ENCODE measurements at regions of chr20 and their contacts with region 1.

Region 1: GRCh38 chr20:35741892-35742740 is at the start of gene RBM39:
- DNase-seq: peak; percentile 97 to 100 (median 99)
- ATAC-seq: peak; percentile 81
- H3K4me3 ChIP-seq: peak within 1 kb of the TSS; percentile 87 to 98
- H3K4me3 Mint-ChIP-seq: peak within 1 kb of the TSS; percentile 96
- H3K27ac ChIP-seq: peak within 1 kb of the TSS; percentile 99 to 100
- H3K27ac Mint-ChIP-seq: peak within 1 kb of the TSS; percentile 100
- H3K4me1 ChIP-seq: peaks cover 44% of the 10 kb centered on the region
- H3K4me1 Mint-ChIP-seq: peaks cover 47% of the 10 kb centered on the region
- H3K27me3 ChIP-seq: no peaks in the 10 kb centered on the region
- H3K27me3 Mint-ChIP-seq: no peaks in the 10 kb centered on the region
- CTCF ChIP-seq: peak; percentile 44
- total RNA-seq, gene RBM39: 1,168 to 1,202 TPM

Region 2: DNA sequence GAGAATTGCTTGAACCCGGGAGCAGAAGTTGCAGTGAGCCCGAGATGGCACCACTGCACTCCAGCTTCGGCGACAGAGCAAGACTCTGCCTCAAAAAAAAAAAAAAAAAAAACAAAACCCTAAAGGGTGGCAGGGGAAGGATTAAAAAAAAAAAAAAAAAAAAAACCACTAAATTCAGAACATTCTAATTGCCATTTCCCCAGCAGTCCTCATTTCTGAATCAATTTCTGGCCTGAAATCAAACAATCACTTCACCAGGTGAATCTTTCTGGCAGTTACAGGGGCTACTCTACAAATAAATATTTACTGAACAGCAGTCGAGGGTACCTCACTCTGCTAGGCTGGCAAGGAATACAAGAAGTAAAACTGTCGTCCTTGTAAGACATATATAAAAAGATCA is 331.5 kb before region 1 on chr20:
- CTCF ChIA-PET with region 1: no interaction called
- POLR2A ChIA-PET with region 1: no interaction called
- intact Hi-C with region 1: no loop called
- DNase-seq: no peak
- ATAC-seq: no peak
- H3K4me3 ChIP-seq: no peak overlapping the region
- H3K4me3 Mint-ChIP-seq: peak overlapping the region; percentile 96
- H3K27ac ChIP-seq: no peak overlapping the region
- H3K27ac Mint-ChIP-seq: peak overlapping the region; percentile 97
- H3K4me1 ChIP-seq: peaks cover 8% of the 10 kb centered on the region
- H3K4me1 Mint-ChIP-seq: peaks cover 25% of the 10 kb centered on the region
- H3K27me3 ChIP-seq: no peaks in the 10 kb centered on the region
- H3K27me3 Mint-ChIP-seq: no peaks in the 10 kb centered on the region
- CTCF ChIP-seq: no peak

Region 3: GRCh38 chr20:35454881-35455609 is 287.1 kb before region 1 on chr20 and contains the start of gene CEP250:
- CTCF ChIA-PET with region 1: no interaction called
- POLR2A ChIA-PET with region 1: interaction called, 13 read pairs
- intact Hi-C with region 1: no loop called
- DNase-seq: peak; percentile 86 to 96 (median 95)
- ATAC-seq: peak; percentile 98
- H3K4me3 ChIP-seq: peak within 1 kb of the TSS; percentile 62 to 94
- H3K4me3 Mint-ChIP-seq: peak within 1 kb of the TSS; percentile 94
- H3K27ac ChIP-seq: peak within 1 kb of the TSS; percentile 52 to 94
- H3K27ac Mint-ChIP-seq: peak within 1 kb of the TSS; percentile 97
- H3K4me1 ChIP-seq: peaks cover 10% of the 10 kb centered on the region
- H3K4me1 Mint-ChIP-seq: peaks cover 21% of the 10 kb centered on the region
- H3K27me3 ChIP-seq: no peaks in the 10 kb centered on the region
- H3K27me3 Mint-ChIP-seq: no peaks in the 10 kb centered on the region
- CTCF ChIP-seq: no peak
- total RNA-seq, gene CEP250: 33.4 to 34.4 TPM

Region 4: GRCh38 chr20:35699127-35699975 is 42.8 kb before region 1 on chr20 and contains the starts of genes NFS1 and ROMO1:
- CTCF ChIA-PET with region 1: no interaction called
- POLR2A ChIA-PET with region 1: interaction called, 24 read pairs
- intact Hi-C with region 1: loop called (anchors 1 kb)
- DNase-seq: peak; percentile 68 to 93 (median 87)
- ATAC-seq: peak; percentile 88
- H3K4me3 ChIP-seq: peak within 1 kb of the TSS; percentile 94 to 98
- H3K4me3 Mint-ChIP-seq: peak within 1 kb of the TSS; percentile 92
- H3K27ac ChIP-seq: peak within 1 kb of the TSS; percentile 85 to 98
- H3K27ac Mint-ChIP-seq: peak within 1 kb of the TSS; percentile 95
- H3K4me1 ChIP-seq: peaks cover 18% of the 10 kb centered on the region
- H3K4me1 Mint-ChIP-seq: peaks cover 42% of the 10 kb centered on the region
- H3K27me3 ChIP-seq: no peaks in the 10 kb centered on the region
- H3K27me3 Mint-ChIP-seq: no peaks in the 10 kb centered on the region
- CTCF ChIP-seq: peak; percentile 21
- total RNA-seq, gene NFS1: 10.7 to 13.1 TPM
- total RNA-seq, gene ROMO1: 39.2 to 43.8 TPM

Region 5: DNA sequence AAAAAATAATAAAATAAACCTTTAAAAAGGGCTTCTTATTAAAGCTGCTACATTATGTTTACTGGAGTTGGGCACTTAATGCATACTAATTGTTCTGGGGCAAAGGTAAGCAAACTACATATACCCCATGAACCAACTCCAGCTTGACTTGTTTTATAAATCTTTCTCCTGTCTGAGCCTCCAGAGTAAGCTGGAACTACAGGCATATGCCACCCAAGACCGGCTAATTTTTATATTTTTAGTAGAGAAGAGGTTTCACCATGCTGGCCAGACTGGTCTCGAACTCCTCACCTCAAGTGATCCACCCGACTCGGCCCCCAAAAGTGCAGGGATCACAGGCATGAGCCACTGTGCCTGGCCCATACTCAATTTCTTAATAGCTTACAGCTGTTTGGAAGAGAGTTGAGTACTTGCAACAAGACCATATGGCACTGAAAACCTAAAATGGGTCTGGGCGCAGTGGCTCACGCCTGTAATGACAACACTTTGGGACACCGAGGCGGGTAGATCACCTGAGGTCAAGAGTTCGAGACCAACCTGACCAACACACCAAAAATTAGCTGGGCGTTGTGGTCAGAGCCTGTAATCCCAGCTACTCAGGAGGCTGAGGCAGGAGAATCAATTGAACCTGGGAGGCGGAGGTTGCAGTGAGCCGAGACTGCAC is 23.0 kb before region 1 on chr20:
- CTCF ChIA-PET with region 1: interaction called, 4 read pairs
- POLR2A ChIA-PET with region 1: interaction called, 16 read pairs
- intact Hi-C with region 1: no loop called
- DNase-seq: no peak
- ATAC-seq: no peak
- H3K4me3 ChIP-seq: no peak overlapping the region
- H3K4me3 Mint-ChIP-seq: no peak overlapping the region
- H3K27ac ChIP-seq: no peak overlapping the region
- H3K27ac Mint-ChIP-seq: peak overlapping the region; percentile 74
- H3K4me1 ChIP-seq: peaks cover 38% of the 10 kb centered on the region
- H3K4me1 Mint-ChIP-seq: peaks cover 60% of the 10 kb centered on the region
- H3K27me3 ChIP-seq: no peaks in the 10 kb centered on the region
- H3K27me3 Mint-ChIP-seq: no peaks in the 10 kb centered on the region
- CTCF ChIP-seq: no peak

Region 6: DNA sequence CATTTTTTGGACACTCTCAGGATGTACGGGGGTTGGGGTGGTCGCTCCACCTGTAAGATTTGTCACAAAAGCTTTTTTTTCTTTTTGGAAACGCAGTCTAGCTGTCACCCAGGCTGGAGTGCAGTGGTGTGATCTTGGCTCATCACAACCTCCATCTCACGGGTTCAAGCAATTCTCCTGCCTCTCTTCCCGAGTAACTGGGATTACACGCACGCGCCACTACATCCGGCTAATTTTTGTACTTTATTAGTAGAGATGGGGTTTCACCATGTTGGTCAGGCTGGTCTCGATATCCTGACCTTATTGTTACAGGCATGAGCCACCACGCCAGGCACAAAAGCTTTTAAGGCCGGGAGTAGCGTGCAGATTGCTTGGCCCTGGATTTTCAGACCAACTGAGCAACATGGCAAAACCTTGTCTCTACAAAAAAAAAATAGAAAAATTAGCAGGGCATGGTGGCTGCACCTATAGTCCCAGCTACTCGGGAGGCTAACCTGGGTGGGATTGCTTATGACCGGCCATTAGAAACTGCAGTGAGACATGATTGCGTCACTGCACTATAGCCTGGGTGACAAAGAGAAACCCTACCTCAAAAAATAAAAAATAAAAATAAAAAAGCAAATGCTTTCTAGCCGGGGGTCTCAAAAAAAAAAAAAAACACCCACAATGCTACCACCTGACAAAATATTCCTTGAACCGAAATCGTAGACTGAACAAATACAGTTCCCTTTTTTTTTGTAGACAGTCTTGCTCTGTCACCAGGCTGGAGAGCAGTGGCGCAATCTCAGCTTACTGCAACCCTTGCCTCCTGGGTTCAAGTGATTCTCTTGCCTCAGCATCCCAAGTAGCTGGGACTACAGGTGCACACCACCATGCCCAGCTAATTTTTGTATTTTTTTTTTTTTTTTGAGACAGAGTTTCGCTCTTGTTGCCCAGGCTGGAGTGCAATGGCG is 15.1 kb before region 1 on chr20:
- CTCF ChIA-PET with region 1: interaction called, 4 read pairs
- POLR2A ChIA-PET with region 1: interaction called, 10 read pairs
- intact Hi-C with region 1: no loop called
- DNase-seq: no peak
- ATAC-seq: no peak
- H3K4me3 ChIP-seq: no peak overlapping the region
- H3K4me3 Mint-ChIP-seq: no peak overlapping the region
- H3K27ac ChIP-seq: no peak overlapping the region
- H3K27ac Mint-ChIP-seq: no peak overlapping the region
- H3K4me1 ChIP-seq: peaks cover 30% of the 10 kb centered on the region
- H3K4me1 Mint-ChIP-seq: peaks cover 58% of the 10 kb centered on the region
- H3K27me3 ChIP-seq: no peaks in the 10 kb centered on the region
- H3K27me3 Mint-ChIP-seq: no peaks in the 10 kb centered on the region
- CTCF ChIP-seq: no peak

Region 7: GRCh38 chr20:35757098-35757705 is 15.1 kb after region 1 on chr20:
- CTCF ChIA-PET with region 1: no interaction called
- POLR2A ChIA-PET with region 1: interaction called, 20 read pairs
- intact Hi-C with region 1: no loop called
- DNase-seq: no peak
- ATAC-seq: peak; percentile 38
- H3K4me3 ChIP-seq: no peak overlapping the region
- H3K4me3 Mint-ChIP-seq: no peak overlapping the region
- H3K27ac ChIP-seq: no peak overlapping the region
- H3K27ac Mint-ChIP-seq: no peak overlapping the region
- H3K4me1 ChIP-seq: no peaks in the 10 kb centered on the region
- H3K4me1 Mint-ChIP-seq: peaks cover 10% of the 10 kb centered on the region
- H3K27me3 ChIP-seq: no peaks in the 10 kb centered on the region
- H3K27me3 Mint-ChIP-seq: no peaks in the 10 kb centered on the region
- CTCF ChIP-seq: no peak

Region 8: DNA sequence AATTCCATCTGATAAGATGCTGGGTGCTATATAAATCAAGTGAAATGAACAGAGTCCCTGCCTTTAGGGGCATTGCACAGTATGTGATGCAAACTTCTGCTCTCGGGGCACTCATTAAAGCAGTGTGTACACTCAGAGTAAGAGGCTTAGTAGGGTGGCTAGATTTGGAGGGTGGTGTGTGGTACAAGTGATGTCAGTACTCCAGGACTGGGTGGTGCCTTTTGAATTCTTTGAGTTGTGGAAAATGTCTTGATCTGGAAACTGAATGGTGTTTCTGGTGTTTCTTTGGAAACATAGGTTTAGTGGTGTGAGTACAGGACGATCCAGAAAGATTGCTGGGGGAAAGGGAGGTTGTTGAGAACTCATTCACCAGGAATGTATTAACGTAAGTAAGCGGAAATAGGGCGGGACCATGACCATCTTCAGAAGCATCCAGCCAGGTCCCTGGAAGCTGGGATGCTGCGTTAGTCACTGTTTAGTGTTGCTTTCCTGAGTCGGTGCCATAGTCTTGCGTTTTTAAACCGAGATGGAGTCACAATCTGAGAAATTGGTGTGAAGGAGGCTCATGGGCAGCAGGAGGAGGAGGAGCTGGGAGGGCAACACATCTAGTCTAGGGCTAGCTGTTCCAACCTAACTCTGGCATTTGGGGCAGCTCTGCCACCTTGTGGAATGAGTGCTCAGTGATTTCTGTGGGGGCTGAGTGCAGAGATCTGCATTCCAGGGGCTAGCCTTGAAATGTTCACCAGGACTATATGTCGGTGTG is 141.8 kb after region 1 on chr20:
- CTCF ChIA-PET with region 1: interaction called, 7 read pairs
- POLR2A ChIA-PET with region 1: interaction called, 3 read pairs
- intact Hi-C with region 1: loop called in 1 of 2 experiments (anchors 5 kb)
- DNase-seq: peak; percentile 30 to 75 (median 60)
- ATAC-seq: peak; percentile 91
- H3K4me3 ChIP-seq: no peak overlapping the region
- H3K4me3 Mint-ChIP-seq: no peak overlapping the region
- H3K27ac ChIP-seq: no peak overlapping the region
- H3K27ac Mint-ChIP-seq: no peak overlapping the region
- H3K4me1 ChIP-seq: peaks cover 6% of the 10 kb centered on the region
- H3K4me1 Mint-ChIP-seq: peaks cover 17% of the 10 kb centered on the region
- H3K27me3 ChIP-seq: no peaks in the 10 kb centered on the region
- H3K27me3 Mint-ChIP-seq: no peaks in the 10 kb centered on the region
- CTCF ChIP-seq: peak; percentile 60

Region 9: GRCh38 chr20:36527331-36528125 is 785.4 kb after region 1 on chr20:
- CTCF ChIA-PET with region 1: no interaction called
- POLR2A ChIA-PET with region 1: no interaction called
- intact Hi-C with region 1: no loop called
- DNase-seq: no peak
- ATAC-seq: no peak
- H3K4me3 ChIP-seq: no peak overlapping the region
- H3K4me3 Mint-ChIP-seq: no peak overlapping the region
- H3K27ac ChIP-seq: no peak overlapping the region
- H3K27ac Mint-ChIP-seq: no peak overlapping the region
- H3K4me1 ChIP-seq: no peaks in the 10 kb centered on the region
- H3K4me1 Mint-ChIP-seq: no peaks in the 10 kb centered on the region
- H3K27me3 ChIP-seq: no peaks in the 10 kb centered on the region
- H3K27me3 Mint-ChIP-seq: no peaks in the 10 kb centered on the region
- CTCF ChIP-seq: no peak

Measured in CD8-positive, alpha-beta T cell (primary cell).